ENCODE measurements at regions of chr2 and their contacts with region 1.

Region 1: GRCh38 chr2:217943446-217944389 is 59.1 kb downstream of the TNS1 start:
- DNase-seq: peak; percentile 76 to 89 (median 82)
- H3K4me3 ChIP-seq: peak overlapping the region; percentile 50
- H3K27ac ChIP-seq: peak overlapping the region; percentile 61 to 68
- H3K4me1 ChIP-seq: peaks cover 27% of the 10 kb centered on the region
- H3K27me3 ChIP-seq: no peaks in the 10 kb centered on the region
- CTCF ChIP-seq: peak in 2 of 3 donors; percentile 40
- EP300 ChIP-seq: no peak
- POLR2A ChIP-seq: peak; percentile 37

Region 2: GRCh38 chr2:217899231-217900009 is 44.3 kb before region 1 on chr2:
- intact Hi-C with region 1: loop called in 1 of 4 experiments (anchors 2 kb)
- DNase-seq: peak; percentile 69 to 84 (median 73)
- H3K4me3 ChIP-seq: no peak overlapping the region
- H3K27ac ChIP-seq: peak overlapping the region in 1 of 2 donors; percentile 66
- H3K4me1 ChIP-seq: peaks cover 53% of the 10 kb centered on the region
- H3K27me3 ChIP-seq: no peaks in the 10 kb centered on the region
- CTCF ChIP-seq: peak; percentile 28 to 63 (median 54)
- EP300 ChIP-seq: no peak
- POLR2A ChIP-seq: peak; percentile 8

Region 3: GRCh38 chr2:217968023-217968422 is 24.3 kb after region 1 on chr2:
- intact Hi-C with region 1: no loop called
- DNase-seq: no peak
- H3K4me3 ChIP-seq: no peak overlapping the region
- H3K27ac ChIP-seq: peak overlapping the region in 1 of 2 donors; percentile 32
- H3K4me1 ChIP-seq: peaks cover 32% of the 10 kb centered on the region
- H3K27me3 ChIP-seq: no peaks in the 10 kb centered on the region
- CTCF ChIP-seq: no peak
- EP300 ChIP-seq: no peak
- POLR2A ChIP-seq: no peak

Region 4: DNA sequence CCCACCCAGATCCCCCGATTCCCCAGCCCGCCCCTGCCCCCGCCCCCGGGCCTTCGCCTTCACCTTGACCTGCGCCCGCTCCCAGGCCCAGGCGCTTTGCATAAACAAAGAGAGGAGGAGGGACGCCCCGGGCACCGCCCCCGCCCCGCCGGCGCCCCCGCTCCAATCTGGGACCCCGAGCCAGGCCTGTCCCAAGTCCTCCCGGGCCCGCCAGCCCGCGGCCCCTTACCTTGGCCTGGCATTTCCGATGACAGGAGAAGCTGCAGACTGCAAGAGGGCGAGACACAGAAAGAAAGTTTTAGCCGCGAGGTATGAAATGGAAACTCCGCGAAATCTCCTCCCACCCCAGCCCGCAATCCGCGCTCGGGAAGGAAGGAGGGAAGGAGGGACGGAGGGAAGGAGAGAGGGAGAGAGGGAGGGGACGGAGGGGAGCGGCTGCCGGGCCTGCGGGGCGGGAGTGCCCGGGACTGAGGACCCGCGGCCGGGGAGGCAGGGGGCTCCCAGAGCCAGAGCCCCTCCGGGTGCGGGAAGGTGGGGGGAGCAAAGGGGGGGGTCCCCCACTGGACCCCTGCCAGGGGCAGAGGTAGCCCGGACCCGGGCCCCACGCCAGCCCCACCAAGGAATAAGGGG is 34.9 kb after region 1 on chr2:
- intact Hi-C with region 1: loop called in 1 of 4 experiments (anchors 5 kb)
- DNase-seq: peak; percentile 69 to 82 (median 77)
- H3K4me3 ChIP-seq: peak overlapping the region; percentile 61
- H3K27ac ChIP-seq: peak overlapping the region; percentile 91 to 93
- H3K4me1 ChIP-seq: peaks cover 42% of the 10 kb centered on the region
- H3K27me3 ChIP-seq: no peaks in the 10 kb centered on the region
- CTCF ChIP-seq: no peak
- EP300 ChIP-seq: no peak
- POLR2A ChIP-seq: no peak

Region 5: DNA sequence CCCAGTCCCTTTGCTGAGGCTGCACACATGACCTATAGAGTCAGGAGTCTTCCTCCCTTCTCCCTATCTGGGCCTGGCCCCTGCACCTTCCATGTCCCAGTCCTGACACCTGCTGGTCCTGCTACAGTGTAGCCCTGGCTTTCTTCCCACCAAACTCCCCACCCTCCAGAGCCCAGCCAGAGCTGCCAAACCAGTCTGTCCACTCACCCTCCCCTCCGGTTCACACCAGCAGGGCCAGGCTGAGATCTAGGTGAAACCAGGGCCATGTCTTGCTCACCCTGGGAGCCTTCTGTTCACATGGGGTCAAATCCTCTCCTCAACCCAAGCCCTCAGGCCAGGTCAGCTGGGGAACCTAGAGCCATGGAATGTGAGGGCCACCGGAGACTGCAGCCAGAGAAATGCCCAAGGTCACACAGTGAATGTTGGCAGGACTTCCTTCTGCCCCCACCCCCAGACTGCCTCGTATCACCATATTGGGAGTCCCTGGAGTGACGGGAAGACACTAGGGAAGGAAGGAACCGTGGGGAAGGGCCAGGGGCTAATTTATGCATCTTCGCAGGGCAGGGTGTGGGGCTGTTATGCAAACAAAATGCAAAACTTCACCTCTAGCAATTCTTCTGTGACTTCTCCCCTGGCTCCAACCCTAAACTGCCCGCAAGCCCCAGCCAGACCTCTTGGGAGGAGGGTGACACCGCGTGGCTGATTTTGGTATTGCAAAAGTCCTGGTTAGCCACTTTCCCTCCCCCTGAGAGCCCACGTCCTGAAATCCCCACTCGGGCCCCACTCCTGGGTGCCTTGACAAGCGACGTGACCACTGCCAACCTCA is 44.5 kb after region 1 on chr2:
- intact Hi-C with region 1: loop called in 1 of 4 experiments (anchors 2 kb)
- DNase-seq: peak; percentile 84 to 92 (median 91)
- H3K4me3 ChIP-seq: no peak overlapping the region
- H3K27ac ChIP-seq: peak overlapping the region in 1 of 2 donors; percentile 32
- H3K4me1 ChIP-seq: peaks cover 12% of the 10 kb centered on the region
- H3K27me3 ChIP-seq: no peaks in the 10 kb centered on the region
- CTCF ChIP-seq: peak; percentile 84 to 92 (median 91)
- EP300 ChIP-seq: no peak
- POLR2A ChIP-seq: no peak

Region 6: GRCh38 chr2:217993817-217994463 is 50.2 kb after region 1 on chr2:
- intact Hi-C with region 1: loop called in 1 of 4 experiments (anchors 2 kb)
- DNase-seq: peak; percentile 67 to 85 (median 80)
- H3K4me3 ChIP-seq: no peak overlapping the region
- H3K27ac ChIP-seq: peak overlapping the region; percentile 54 to 93
- H3K4me1 ChIP-seq: peaks cover 37% of the 10 kb centered on the region
- H3K27me3 ChIP-seq: no peaks in the 10 kb centered on the region
- CTCF ChIP-seq: peak; percentile 55 to 58 (median 55)
- EP300 ChIP-seq: no peak
- POLR2A ChIP-seq: no peak

Measured in ovary (tissue), 10 donors.